ENCODE measurements at regions of chr15 and their contacts with region 1.

Region 1: GRCh38 chr15:87896936-87897335 is 359.6 kb downstream of the NTRK3 start:
- DNase-seq: no peak
- H3K4me3 ChIP-seq: no peak overlapping the region
- CTCF ChIP-seq: no peak
- POLR2A ChIP-seq: no peak

Region 2: GRCh38 chr15:87863152-87863551 is 33.8 kb before region 1 on chr15:
- intact Hi-C with region 1: loop called (anchors 1 kb)
- DNase-seq: no peak
- H3K4me3 ChIP-seq: no peak overlapping the region
- CTCF ChIP-seq: no peak
- POLR2A ChIP-seq: no peak